ENCODE measurements at regions of chr3 and their contacts with region 1.

Region 1: GRCh38 chr3:61807865-61808276 is 246.5 kb downstream of the PTPRG start:
- DNase-seq: no peak

Region 2: GRCh38 chr3:61637088-61638051 is 170.5 kb before region 1 on chr3:
- intact Hi-C with region 1: loop called (anchors 5 kb)
- DNase-seq: no peak

Region 3: DNA sequence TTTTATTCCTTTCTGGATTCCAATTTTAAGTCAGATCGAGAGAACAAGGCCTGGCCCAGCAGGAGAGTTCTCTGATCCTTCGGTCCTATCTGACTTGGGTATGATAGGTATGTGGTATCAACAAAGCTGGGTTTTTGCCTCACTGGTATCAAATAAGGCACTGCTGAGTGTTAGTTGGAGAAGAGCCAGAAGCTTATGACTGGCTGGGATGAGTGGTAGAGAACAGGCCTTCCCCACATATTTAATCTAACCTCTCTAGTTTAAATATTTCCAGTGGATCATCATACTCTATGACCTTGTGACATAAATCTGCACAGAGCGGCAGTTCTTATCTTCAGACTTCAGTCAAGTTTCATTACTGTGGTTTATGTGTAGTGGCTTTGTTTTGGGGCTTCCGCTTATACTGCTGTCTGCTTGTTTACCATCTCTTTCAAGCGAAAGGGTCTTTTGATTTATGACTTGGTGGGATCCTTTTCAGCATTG is 82.0 kb before region 1 on chr3:
- intact Hi-C with region 1: loop called (anchors 5 kb)
- DNase-seq: no peak

Region 4: GRCh38 chr3:61847784-61848462 is 40.1 kb after region 1 on chr3:
- intact Hi-C with region 1: loop called (anchors 5 kb)
- DNase-seq: no peak

Region 5: GRCh38 chr3:61985020-61985419 is 177.1 kb after region 1 on chr3:
- intact Hi-C with region 1: no loop called
- DNase-seq: no peak